Activated CD4-positive, alpha-beta memory T cell treated with anti-CD3 and anti-CD28 coated beads, Interleukin-2, amount 10 ng/mL, durations not matched to agents 7 days and 5 days (primary cell): ENCODE measurements at regions of chr5 and their contacts with region 1.

Region 1: DNA sequence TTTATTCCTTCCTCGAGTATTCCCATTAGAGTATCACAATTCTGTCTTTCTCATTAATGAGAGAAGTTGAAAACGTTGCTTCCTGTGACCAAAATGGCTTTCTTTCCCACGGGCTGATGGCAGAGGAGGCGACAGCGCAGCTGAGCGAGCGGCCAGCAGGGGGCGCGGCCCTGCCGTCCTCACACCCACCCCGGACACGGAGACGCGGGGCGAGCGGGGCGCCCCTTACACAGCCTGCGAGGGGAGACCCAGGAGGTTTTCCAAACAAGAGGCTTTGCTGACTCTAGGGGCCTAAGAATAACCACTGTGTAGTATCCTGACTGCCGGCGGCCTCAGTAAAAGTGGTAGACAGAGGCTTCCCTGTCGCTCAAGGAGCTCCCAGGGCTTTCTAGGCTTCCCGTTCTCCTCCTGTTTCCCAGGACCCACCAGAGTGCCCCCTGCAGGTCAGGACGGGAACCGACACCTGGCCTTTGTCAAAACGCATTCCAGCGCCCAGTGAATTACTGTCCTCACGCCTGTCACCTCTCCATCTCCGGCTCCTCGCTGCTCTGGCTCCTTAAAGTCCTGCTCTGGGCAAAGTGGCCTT is 27.3 kb upstream of the FGF1 start:
- DNase-seq: peak; percentile 84
- H3K4me3 Mint-ChIP-seq: peak overlapping the region; percentile 63
- H3K27ac Mint-ChIP-seq: no peak overlapping the region
- H3K4me1 Mint-ChIP-seq: peaks cover 5% of the 10 kb centered on the region
- H3K27me3 Mint-ChIP-seq: peaks cover 7% of the 10 kb centered on the region

Region 2: DNA sequence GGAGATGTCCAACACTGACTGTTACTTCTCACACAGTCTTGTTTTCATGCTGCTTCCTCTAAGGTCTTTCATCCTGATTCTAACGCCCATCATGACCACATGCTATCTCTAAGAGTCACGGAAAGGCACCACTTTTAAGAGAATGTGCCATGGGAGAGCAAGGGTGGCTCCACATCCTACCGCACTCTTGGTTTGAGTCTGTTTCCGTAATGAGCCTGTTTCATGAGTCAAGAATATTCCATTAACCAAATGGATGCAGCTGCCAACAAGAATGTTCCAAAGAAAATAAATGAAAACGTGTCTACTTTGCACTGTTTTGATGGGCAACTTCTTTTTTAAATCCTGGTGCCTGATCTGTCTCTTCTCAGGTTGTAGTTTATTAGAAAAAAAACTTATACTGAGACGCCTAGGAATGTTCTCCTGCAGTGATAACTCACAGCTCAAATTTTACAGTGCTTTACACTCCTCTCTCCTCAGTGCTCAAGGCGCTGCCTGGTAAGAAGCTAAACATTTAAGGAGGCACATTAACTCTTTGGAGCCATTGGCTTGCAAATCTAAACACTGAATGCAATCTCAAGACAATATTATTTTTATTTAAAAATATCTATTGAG is 151.6 kb before region 1 on chr5:
- CTCF ChIA-PET with region 1: no interaction called
- POLR2A ChIA-PET with region 1: no interaction called
- DNase-seq: no peak
- H3K4me3 Mint-ChIP-seq: no peak overlapping the region
- H3K27ac Mint-ChIP-seq: no peak overlapping the region
- H3K4me1 Mint-ChIP-seq: no peaks in the 10 kb centered on the region
- H3K27me3 Mint-ChIP-seq: peaks cover 4% of the 10 kb centered on the region

Region 3: DNA sequence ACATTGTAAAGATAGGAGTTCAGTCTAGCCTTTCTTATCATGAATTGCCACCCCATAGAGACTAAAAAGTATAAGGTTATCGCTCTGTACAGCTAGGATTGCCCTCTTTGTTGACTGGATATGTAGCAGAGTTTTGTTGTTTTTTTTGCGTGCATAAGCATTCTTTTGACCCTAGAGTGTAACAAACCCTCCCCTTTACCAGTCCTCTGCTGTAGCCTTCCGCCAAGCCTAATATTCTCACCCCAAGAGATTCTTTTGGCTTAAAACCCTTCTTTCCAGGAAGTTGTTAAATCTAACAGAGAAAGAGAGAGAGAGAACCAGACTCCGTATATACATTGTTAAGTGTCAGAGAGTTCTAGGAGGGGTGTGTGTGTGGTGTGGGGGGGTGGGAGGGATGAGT is 141.2 kb before region 1 on chr5:
- CTCF ChIA-PET with region 1: no interaction called
- POLR2A ChIA-PET with region 1: no interaction called
- DNase-seq: no peak
- H3K4me3 Mint-ChIP-seq: no peak overlapping the region
- H3K27ac Mint-ChIP-seq: no peak overlapping the region
- H3K4me1 Mint-ChIP-seq: peaks cover 1% of the 10 kb centered on the region
- H3K27me3 Mint-ChIP-seq: no peaks in the 10 kb centered on the region

Region 4: GRCh38 chr5:142699184-142699720 is 14.0 kb before region 1 on chr5:
- CTCF ChIA-PET with region 1: interaction called, 27 read pairs
- POLR2A ChIA-PET with region 1: no interaction called
- DNase-seq: peak; percentile 80
- H3K4me3 Mint-ChIP-seq: no peak overlapping the region
- H3K27ac Mint-ChIP-seq: no peak overlapping the region
- H3K4me1 Mint-ChIP-seq: no peaks in the 10 kb centered on the region
- H3K27me3 Mint-ChIP-seq: peaks cover 7% of the 10 kb centered on the region

Region 5: DNA sequence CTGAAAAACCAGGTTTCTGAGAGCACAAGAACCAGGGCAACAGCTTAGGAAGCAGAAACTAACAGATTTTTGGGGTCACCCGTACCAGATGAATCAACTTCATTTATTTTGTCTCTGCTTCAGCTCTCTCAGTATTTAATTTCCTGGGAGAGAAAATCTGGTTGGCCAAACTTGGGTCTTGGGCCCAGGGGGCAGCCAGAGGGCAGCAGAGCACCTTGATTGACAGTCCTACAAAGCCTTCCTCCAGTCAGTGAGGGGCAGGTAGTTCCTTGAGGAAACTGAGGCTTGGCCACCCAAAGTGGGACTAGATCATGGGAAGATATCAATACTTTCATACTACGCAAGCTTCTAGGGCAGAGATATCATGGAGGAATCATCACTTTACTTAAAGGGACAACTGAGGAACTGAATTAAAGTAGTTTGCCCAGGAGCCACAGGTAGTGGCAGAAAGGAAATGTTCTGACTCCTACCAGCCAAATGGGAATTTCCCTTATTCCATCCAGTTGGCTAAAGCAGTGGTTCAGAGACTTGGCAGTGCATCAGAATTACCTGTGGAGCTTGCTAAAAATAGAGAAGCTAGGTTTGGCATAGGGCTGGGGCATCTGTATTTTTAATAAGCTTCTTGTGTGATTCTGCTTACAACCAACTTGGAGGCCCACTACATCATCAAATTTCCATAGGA is 35.5 kb after region 1 on chr5:
- CTCF ChIA-PET with region 1: interaction called, 13 read pairs
- POLR2A ChIA-PET with region 1: no interaction called
- DNase-seq: peak; percentile 59
- H3K4me3 Mint-ChIP-seq: no peak overlapping the region
- H3K27ac Mint-ChIP-seq: no peak overlapping the region
- H3K4me1 Mint-ChIP-seq: peaks cover 14% of the 10 kb centered on the region
- H3K27me3 Mint-ChIP-seq: peaks cover 4% of the 10 kb centered on the region

Region 6: GRCh38 chr5:142852416-142853198 is 139.4 kb after region 1 on chr5:
- CTCF ChIA-PET with region 1: interaction called, 11 read pairs
- POLR2A ChIA-PET with region 1: no interaction called
- DNase-seq: no peak
- H3K4me3 Mint-ChIP-seq: no peak overlapping the region
- H3K27ac Mint-ChIP-seq: no peak overlapping the region
- H3K4me1 Mint-ChIP-seq: peaks cover 2% of the 10 kb centered on the region
- H3K27me3 Mint-ChIP-seq: no peaks in the 10 kb centered on the region

Region 7: DNA sequence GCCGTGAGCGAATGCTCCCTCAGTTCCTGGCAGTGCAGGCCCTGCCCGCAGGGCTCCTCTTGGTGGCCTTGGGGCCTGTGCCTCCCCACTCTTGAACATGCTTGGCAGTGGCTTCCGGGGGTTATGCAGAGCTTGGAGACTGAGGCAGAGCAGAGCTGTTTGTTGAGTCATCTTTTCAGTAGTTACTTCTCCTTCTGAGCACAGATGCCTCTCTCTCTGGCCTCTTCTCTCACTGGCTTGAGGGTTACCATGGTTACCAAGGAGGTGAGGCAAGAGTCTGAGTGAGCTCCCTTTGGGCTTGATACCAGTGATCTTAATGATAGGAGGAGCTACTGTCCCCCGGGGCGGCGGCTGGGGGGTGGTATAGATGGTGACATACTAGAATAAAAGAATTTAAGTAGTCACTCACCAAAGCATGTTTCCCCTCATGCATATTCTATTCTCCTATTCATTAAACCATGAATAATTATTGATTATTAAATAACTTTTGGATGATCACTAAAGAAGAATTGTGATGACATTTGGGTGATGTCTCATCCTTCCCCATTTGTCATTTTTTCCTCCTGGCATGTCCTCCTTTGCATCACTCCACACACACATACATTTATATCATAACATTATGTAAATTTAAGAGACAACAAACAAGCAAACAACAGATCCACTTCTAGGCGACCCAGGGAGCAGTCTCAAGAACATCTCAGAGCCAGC is 168.0 kb after region 1 on chr5:
- CTCF ChIA-PET with region 1: interaction called, 60 read pairs
- POLR2A ChIA-PET with region 1: interaction called, 5 read pairs
- DNase-seq: no peak
- H3K4me3 Mint-ChIP-seq: no peak overlapping the region
- H3K27ac Mint-ChIP-seq: no peak overlapping the region
- H3K4me1 Mint-ChIP-seq: peaks cover 23% of the 10 kb centered on the region
- H3K27me3 Mint-ChIP-seq: no peaks in the 10 kb centered on the region

Region 8: GRCh38 chr5:142915813-142916424 is 202.7 kb after region 1 on chr5:
- CTCF ChIA-PET with region 1: interaction called, 17 read pairs
- POLR2A ChIA-PET with region 1: no interaction called
- DNase-seq: no peak
- H3K4me3 Mint-ChIP-seq: no peak overlapping the region
- H3K27ac Mint-ChIP-seq: no peak overlapping the region
- H3K4me1 Mint-ChIP-seq: no peaks in the 10 kb centered on the region
- H3K27me3 Mint-ChIP-seq: no peaks in the 10 kb centered on the region